ENCODE measurements at regions of chr4 and their contacts with region 1.

Region 1: DNA sequence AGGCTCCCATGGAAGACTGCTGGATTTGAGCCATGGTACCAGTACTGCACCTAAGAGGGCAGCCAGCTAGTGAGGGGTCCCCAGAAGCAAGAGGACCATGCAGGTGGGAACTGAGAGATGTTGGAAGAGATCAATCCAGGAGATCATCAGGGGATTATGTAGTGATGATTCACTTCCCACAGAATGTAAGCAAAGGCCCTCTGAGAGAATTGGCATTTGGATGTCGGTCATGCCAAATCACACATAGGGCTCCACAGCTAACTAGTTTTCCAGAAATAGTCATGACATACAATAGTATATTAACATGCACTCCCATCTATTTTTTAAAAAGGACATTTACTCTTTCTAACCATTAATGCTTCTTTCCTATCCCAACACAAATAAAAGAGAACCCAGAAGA is 112.5 kb downstream of the RASGEF1B start:
- DNase-seq: no peak
- H3K4me3 ChIP-seq: no peak overlapping the region
- H3K27ac ChIP-seq: no peak overlapping the region
- H3K4me1 ChIP-seq: no peaks in the 10 kb centered on the region
- H3K27me3 ChIP-seq: no peaks in the 10 kb centered on the region
- CTCF ChIP-seq: no peak
- EP300 ChIP-seq: no peak
- POLR2A ChIP-seq: no peak

Region 2: GRCh38 chr4:80876810-80877209 is 482.4 kb before region 1 on chr4:
- intact Hi-C with region 1: no loop called
- DNase-seq: no peak
- H3K4me3 ChIP-seq: no peak overlapping the region
- H3K27ac ChIP-seq: no peak overlapping the region
- H3K4me1 ChIP-seq: no peaks in the 10 kb centered on the region
- H3K27me3 ChIP-seq: no peaks in the 10 kb centered on the region
- CTCF ChIP-seq: no peak
- EP300 ChIP-seq: no peak
- POLR2A ChIP-seq: no peak

Region 3: GRCh38 chr4:81314196-81314896 is 44.9 kb before region 1 on chr4:
- intact Hi-C with region 1: loop called in 1 of 4 experiments (anchors 2 kb)
- DNase-seq: no peak
- H3K4me3 ChIP-seq: no peak overlapping the region
- H3K27ac ChIP-seq: no peak overlapping the region
- H3K4me1 ChIP-seq: no peaks in the 10 kb centered on the region
- H3K27me3 ChIP-seq: no peaks in the 10 kb centered on the region
- CTCF ChIP-seq: no peak
- EP300 ChIP-seq: no peak
- POLR2A ChIP-seq: no peak